ENCODE measurements at regions of chr1 and their contacts with region 1.

Region 1: DNA sequence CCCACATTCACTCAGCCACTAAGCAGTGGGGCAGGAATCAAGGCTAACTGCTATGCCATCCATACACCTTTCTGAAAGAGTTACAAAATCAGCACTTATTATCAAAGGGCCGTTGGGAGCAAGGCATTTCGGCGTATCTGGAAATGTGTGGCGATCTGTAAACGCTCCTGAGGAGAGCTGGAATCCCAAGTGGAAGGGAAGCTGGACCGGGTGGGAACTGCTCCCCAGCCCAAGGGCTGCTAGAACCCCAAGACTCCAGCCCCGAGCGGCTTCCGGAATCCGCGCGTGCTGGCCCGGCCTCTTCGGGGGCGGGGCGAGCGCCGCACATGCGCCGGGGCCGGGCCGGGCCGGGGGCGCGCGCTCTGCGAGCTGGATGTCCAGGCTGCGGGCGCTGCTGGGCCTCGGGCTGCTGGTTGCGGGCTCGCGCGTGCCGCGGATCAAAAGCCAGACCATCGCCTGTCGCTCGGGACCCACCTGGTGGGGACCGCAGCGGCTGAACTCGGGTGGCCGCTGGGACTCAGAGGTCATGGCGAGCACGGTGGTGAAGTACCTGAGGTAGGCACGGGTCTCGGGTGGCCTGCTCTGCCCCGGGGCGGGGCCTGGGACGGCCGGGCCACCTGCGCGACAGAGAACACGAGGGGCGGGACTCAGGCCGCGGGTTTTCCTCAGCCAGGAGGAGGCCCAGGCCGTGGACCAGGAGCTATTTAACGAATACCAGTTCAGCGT is at the start of gene NAXE:
- DNase-seq: peak; percentile 68
- H3K4me3 Mint-ChIP-seq: peak within 1 kb of the TSS; percentile 83
- H3K27ac Mint-ChIP-seq: peak within 1 kb of the TSS; percentile 85
- H3K4me1 Mint-ChIP-seq: peaks cover 19% of the 10 kb centered on the region
- H3K27me3 Mint-ChIP-seq: no peaks in the 10 kb centered on the region
- total RNA-seq, gene NAXE: 77.8 and 78.0 TPM in 2 replicates

Region 2: DNA sequence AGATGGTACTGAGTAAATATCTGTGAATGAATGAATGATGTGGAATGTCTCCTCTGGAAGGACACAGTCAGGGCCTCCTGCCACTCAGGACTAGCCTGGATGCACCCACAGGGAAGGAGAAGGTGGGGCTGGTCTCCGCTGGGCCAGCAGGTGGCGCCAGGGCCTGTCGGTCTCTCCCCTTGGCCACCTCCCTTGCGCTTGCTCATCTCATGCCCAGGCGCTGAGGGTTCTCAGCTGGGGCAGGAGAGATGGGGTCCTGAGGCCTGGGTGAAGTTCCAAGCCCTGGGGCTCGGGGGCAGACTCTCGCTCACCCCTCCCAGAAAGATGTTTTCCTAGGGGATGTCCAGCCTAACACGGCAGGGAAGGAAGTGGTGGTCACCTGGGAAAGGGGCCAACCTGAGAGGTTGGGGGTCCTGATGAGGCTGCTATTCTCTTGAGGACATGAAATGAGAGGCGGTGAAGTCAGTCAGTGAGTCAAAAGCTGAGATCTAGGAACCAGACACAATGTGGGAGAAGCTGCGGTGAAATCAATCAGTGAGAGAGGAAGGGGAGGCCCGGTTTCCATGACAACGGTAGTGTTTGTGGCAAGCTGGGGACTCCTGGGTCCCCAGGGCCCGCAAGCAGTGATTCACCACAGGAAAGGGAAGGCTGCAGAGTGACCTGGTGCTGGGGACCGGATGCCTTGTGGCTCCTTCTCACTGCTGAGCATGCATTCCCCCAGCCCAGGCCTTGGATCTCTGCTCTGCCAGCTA is 494.8 kb before region 1 on chr1:
- intact Hi-C with region 1: no loop called
- DNase-seq: peak; percentile 82
- H3K4me3 Mint-ChIP-seq: peak overlapping the region; percentile 23
- H3K27ac Mint-ChIP-seq: peak overlapping the region; percentile 88
- H3K4me1 Mint-ChIP-seq: peaks cover 43% of the 10 kb centered on the region
- H3K27me3 Mint-ChIP-seq: peaks cover 25% of the 10 kb centered on the region

Region 3: DNA sequence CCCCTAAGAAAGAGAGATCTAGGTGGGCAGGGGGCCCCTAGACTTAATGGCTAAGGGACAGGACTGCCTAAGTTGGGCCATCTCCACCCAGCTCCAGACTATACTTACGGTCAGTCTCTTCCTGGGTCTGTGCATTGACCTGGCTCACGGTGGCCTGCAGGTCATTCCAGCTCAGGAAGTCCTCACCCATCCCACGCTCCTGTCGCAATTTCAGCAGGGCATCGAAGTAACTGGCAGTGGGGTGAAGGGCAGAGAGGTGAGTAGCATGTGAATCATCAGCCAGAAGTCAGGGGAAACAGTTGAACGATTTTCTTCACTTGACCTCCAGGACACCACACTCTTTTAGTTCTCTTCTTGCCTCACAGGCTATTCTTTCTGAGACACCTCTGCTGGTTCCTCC is 39.7 kb before region 1 on chr1:
- intact Hi-C with region 1: no loop called
- DNase-seq: no peak
- H3K4me3 Mint-ChIP-seq: no peak overlapping the region
- H3K27ac Mint-ChIP-seq: no peak overlapping the region
- H3K4me1 Mint-ChIP-seq: peaks cover 5% of the 10 kb centered on the region
- H3K27me3 Mint-ChIP-seq: no peaks in the 10 kb centered on the region

Region 4: DNA sequence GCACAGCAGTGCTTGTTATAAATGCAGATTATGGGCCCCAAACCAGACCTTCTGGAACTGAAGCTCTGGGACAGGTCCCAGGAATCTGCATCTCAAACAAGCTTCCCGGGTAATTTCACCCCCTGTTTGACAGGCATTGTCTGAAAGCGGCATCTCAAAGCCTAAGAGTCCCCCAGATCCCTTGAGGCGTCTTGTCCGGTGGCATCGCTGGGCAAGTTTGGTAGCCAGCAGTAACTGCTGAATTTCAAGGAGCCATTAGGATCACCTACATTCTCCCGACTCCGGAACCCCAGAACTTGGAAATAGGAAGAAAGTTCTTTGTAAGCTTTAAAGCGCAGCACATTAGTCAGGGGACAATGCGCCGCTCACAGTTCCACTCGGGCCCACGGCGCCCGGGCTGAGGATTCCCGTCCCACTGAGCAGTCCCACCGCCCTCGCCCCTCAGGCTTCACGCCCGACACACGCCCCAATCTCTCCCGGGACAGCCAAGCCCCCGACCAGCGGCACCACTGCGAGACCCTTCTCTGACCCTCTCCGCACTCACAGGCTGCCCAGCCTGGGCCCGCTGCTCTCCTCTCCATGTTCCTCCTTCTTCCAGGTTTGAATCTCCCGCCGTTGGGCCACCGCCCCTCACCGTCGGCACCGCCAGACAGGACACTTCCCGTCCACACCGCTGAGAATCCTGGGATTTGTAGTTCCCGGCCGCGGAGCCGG is 19.5 kb before region 1 on chr1 and contains the start of gene IQGAP3:
- intact Hi-C with region 1: loop called (anchors 1 kb)
- DNase-seq: peak; percentile 74
- H3K4me3 Mint-ChIP-seq: peak within 1 kb of the TSS; percentile 96
- H3K27ac Mint-ChIP-seq: peak within 1 kb of the TSS; percentile 76
- H3K4me1 Mint-ChIP-seq: peaks cover 28% of the 10 kb centered on the region
- H3K27me3 Mint-ChIP-seq: peaks cover 18% of the 10 kb centered on the region
- total RNA-seq, gene IQGAP3: 10.3 and 11.2 TPM in 2 replicates